PC-9 (cell line): ENCODE measurements at regions of chr1 and their contacts with region 1.

Region 1: GRCh38 chr1:150121236-150121862 is 28.4 kb upstream of the PLEKHO1 start:
- DNase-seq: peak in 1 of 2 experiments; percentile 62
- H3K4me3 ChIP-seq: no peak overlapping the region
- H3K27ac ChIP-seq: no peak overlapping the region
- H3K4me1 ChIP-seq: peaks cover 10% of the 10 kb centered on the region; the same call in 1 of the 2 replicates
- H3K27me3 ChIP-seq: no peaks in the 10 kb centered on the region
- CTCF ChIP-seq: no peak

Region 2: GRCh38 chr1:149927503-149928387 is 193.6 kb before region 1 on chr1 and contains the start of gene SF3B4:
- CTCF ChIA-PET with region 1: no interaction called
- POLR2A ChIA-PET with region 1: no interaction called
- intact Hi-C with region 1: no loop called
- DNase-seq: peak; percentile 89 to 90
- H3K4me3 ChIP-seq: peak within 1 kb of the TSS; percentile 69
- H3K27ac ChIP-seq: peak within 1 kb of the TSS; percentile 85
- H3K4me1 ChIP-seq: peaks cover 29% of the 10 kb centered on the region
- H3K27me3 ChIP-seq: no peaks in the 10 kb centered on the region
- CTCF ChIP-seq: no peak
- total RNA-seq, gene SF3B4: 50.8 and 73.1 TPM in 2 replicates

Region 3: DNA sequence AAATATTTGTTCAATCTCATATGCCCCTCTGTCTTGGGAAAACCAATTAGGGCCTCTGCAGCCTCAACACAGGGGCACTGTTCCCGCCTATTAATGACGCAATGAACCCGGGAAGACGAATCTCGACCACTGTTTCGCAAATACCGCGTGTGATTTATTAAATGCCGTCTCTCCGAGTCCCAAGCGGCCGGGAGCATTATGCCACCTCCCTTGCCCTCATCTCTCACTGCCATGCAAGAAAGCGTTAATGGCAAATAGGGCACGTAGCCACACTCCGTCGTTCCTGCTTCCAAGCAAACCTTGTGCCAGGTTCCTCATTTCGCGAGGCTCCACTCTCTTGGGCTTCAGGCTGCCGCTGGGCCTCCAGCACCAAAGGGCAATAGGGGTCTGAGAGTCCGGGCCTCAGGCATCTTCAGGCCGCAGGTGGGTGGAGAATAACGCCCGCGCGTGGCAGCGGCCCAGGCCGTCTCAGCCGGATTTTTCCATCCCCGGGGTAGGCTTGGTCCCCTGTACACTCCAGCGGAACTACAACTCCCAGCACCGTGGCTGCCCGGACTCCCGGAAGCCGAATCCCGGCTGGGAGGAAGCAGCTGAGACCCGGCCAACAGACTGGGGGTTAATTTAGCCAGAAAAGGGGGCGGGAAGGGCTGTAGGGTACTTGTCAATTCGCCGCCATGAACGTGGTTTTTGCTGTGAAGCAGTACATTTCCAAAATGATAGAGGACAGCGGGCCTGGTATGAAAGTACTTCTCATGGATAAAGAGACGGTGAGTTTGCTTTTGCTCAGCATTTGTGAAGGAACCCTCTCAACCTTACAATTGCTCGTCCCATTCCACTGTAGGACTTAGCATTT is 53.9 kb before region 1 on chr1 and contains the start of gene VPS45:
- CTCF ChIA-PET with region 1: no interaction called
- POLR2A ChIA-PET with region 1: no interaction called
- intact Hi-C with region 1: no loop called
- DNase-seq: peak; percentile 80 to 82
- H3K4me3 ChIP-seq: peak within 1 kb of the TSS; percentile 76
- H3K27ac ChIP-seq: peak within 1 kb of the TSS; percentile 87
- H3K4me1 ChIP-seq: peaks cover 23% of the 10 kb centered on the region
- H3K27me3 ChIP-seq: no peaks in the 10 kb centered on the region
- CTCF ChIP-seq: no peak
- total RNA-seq, gene VPS45: 27.8 and 30.3 TPM in 2 replicates

Region 4: DNA sequence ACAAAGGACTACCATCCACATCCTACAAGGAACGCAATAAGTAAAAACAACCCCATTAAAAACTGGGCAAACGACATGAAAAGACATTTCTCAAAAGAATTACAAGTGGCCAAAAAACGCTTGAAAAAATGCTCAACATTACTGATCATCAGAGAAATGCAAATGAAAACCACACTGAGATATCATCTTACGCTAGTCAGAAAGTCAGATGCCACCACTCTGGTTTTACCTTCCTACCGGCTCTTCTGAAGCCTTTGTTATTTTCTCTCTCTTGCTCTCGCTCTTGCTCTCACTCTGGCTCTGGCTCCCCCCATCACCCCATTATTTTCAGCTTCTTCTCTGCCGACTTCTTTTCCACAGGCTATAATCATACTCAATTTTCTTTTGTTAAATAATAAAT is 15.0 kb before region 1 on chr1:
- CTCF ChIA-PET with region 1: interaction called, 17 read pairs
- POLR2A ChIA-PET with region 1: no interaction called
- intact Hi-C with region 1: no loop called
- DNase-seq: no peak
- H3K4me3 ChIP-seq: no peak overlapping the region
- H3K27ac ChIP-seq: no peak overlapping the region
- H3K4me1 ChIP-seq: no peaks in the 10 kb centered on the region
- H3K27me3 ChIP-seq: no peaks in the 10 kb centered on the region
- CTCF ChIP-seq: no peak

Region 5: DNA sequence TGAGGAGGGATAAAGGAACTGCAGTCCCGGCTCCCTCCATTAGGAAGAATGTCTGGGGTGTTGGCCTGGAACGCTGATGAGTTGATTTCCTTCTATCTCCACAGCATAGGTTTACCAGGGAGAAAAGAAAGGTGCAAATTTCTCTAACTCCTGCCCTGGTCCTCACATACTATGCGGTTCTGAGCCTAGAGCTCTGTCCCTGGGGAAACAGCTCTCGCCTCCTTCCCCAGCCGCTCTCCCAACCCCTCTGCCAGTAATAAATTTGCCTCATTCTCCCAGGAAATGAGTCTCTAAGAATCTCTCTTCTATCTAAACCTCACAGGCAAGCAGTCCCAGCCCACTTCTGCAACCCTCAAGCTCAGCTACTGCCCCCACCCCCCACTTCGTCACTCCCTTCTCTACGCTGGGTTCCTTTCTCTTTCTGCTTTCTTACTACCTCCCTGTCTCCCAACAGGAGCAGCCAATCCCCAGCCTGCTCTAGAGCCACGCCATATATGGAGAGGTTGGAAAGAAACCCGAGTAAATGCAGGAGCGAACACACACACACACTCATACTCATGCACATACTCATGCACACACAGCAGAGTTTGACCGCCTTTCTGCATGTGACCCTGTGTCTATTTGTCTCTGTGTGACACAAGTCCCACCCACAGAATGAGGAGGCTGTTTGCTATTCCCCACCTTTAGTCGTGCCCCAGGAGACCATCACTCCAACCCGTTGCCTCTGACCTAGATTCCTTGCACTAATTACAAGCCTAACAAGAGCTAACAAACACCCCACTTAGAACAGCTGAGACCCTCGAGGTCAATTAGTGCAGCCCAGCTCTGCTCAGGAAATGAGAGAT is 41.7 kb after region 1 on chr1:
- CTCF ChIA-PET with region 1: no interaction called
- POLR2A ChIA-PET with region 1: no interaction called
- intact Hi-C with region 1: no loop called
- DNase-seq: no peak
- H3K4me3 ChIP-seq: no peak overlapping the region
- H3K27ac ChIP-seq: no peak overlapping the region
- H3K4me1 ChIP-seq: no peaks in the 10 kb centered on the region
- H3K27me3 ChIP-seq: no peaks in the 10 kb centered on the region
- CTCF ChIP-seq: no peak